K562 (cell line): ENCODE measurements at regions of chr2 and their contacts with region 1.

Region 1: DNA sequence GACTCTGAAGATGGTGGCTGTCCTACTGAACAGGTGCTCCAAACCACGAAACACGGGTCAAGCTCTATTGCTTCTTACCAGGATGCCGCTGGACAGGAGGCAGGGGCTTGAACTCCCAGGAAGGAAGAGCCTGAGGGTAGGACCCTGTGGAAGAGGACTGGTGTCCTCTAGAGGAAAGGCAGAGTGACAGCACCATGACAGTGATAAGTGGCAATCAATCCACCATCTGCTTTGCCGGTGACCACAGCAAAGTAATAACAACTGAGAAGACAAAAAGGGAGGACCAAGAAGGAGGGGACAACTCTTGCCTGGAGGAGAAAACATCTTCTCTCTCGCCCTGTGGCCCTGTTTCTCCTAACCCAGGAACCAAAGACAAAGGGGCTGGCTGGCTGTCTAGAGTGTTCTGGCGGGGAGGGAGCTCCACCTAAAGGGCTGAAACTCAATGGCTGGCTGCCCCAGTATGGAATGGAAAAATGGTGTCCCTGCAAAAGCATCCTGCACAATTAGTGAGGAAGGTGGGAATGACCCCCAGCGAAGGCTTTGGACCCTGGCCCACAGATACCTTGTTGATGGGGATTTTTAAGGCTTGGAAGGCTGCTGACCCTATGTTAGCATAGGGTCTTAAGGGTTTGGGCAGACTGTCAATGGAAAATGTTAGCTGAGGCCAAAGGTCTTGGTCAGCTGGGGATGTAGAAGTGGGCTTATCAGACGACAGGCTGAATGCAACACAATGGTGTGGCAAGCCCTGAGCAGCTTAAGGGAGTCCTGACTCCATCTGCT is 35.4 kb downstream of the PROC start:
- DNase-seq: peak; percentile 66 to 74 (median 70)
- ATAC-seq: peak; percentile 98
- H3K4me3 ChIP-seq: no peak overlapping the region
- H3K27ac ChIP-seq: no peak overlapping the region
- H3K4me1 ChIP-seq: no peaks in the 10 kb centered on the region; a peak in 1 of 5 replicates
- H3K27me3 ChIP-seq: peaks cover 0 to 14% of the 10 kb centered on the region in 2 experiments; a peak in 2 of 5 replicates
- CTCF ChIP-seq: peak; percentile 66 to 89 (median 77)
- EP300 ChIP-seq: no peak
- POLR2A ChIP-seq: no peak
- RAD21 ChIP-seq: peak; percentile 52 to 84

Region 2: GRCh38 chr2:127208313-127208712 is 245.3 kb before region 1 on chr2:
- CTCF ChIA-PET with region 1: no interaction called
- POLR2A ChIA-PET with region 1: no interaction called
- in situ Hi-C with region 1: loop called (anchors 10 kb)
- intact Hi-C with region 1: no loop called
- DNase-seq: no peak
- ATAC-seq: no peak
- H3K4me3 ChIP-seq: no peak overlapping the region
- H3K27ac ChIP-seq: no peak overlapping the region
- H3K4me1 ChIP-seq: peaks cover 0 to 5% of the 10 kb centered on the region in 2 experiments; a peak in 1 of 5 replicates
- H3K27me3 ChIP-seq: peaks cover 6 to 34% of the 10 kb centered on the region in 2 experiments; a peak in 4 of 5 replicates
- CTCF ChIP-seq: no peak
- EP300 ChIP-seq: no peak
- POLR2A ChIP-seq: no peak
- RAD21 ChIP-seq: no peak

Region 3: GRCh38 chr2:127277028-127277427 is 176.6 kb before region 1 on chr2:
- CTCF ChIA-PET with region 1: no interaction called
- POLR2A ChIA-PET with region 1: no interaction called
- in situ Hi-C with region 1: no loop called
- intact Hi-C with region 1: no loop called
- DNase-seq: no peak
- ATAC-seq: no peak
- H3K4me3 ChIP-seq: no peak overlapping the region
- H3K27ac ChIP-seq: no peak overlapping the region
- H3K4me1 ChIP-seq: no peaks in the 10 kb centered on the region
- H3K27me3 ChIP-seq: no peaks in the 10 kb centered on the region
- CTCF ChIP-seq: no peak
- EP300 ChIP-seq: no peak
- POLR2A ChIP-seq: no peak
- RAD21 ChIP-seq: no peak

Region 4: GRCh38 chr2:127324635-127325034 is 128.9 kb before region 1 on chr2:
- CTCF ChIA-PET with region 1: interaction called, 27 read pairs
- POLR2A ChIA-PET with region 1: no interaction called
- in situ Hi-C with region 1: no loop called
- intact Hi-C with region 1: loop called (anchors 1 kb)
- DNase-seq: peak; percentile 31 to 54 (median 38)
- ATAC-seq: peak; percentile 79
- H3K4me3 ChIP-seq: no peak overlapping the region
- H3K27ac ChIP-seq: no peak overlapping the region
- H3K4me1 ChIP-seq: no peaks in the 10 kb centered on the region
- H3K27me3 ChIP-seq: no peaks in the 10 kb centered on the region
- CTCF ChIP-seq: peak; percentile 50 to 76 (median 51); a peak in 4 of 6 replicates
- EP300 ChIP-seq: no peak
- POLR2A ChIP-seq: no peak
- RAD21 ChIP-seq: peak; percentile 72 to 78

Region 5: DNA sequence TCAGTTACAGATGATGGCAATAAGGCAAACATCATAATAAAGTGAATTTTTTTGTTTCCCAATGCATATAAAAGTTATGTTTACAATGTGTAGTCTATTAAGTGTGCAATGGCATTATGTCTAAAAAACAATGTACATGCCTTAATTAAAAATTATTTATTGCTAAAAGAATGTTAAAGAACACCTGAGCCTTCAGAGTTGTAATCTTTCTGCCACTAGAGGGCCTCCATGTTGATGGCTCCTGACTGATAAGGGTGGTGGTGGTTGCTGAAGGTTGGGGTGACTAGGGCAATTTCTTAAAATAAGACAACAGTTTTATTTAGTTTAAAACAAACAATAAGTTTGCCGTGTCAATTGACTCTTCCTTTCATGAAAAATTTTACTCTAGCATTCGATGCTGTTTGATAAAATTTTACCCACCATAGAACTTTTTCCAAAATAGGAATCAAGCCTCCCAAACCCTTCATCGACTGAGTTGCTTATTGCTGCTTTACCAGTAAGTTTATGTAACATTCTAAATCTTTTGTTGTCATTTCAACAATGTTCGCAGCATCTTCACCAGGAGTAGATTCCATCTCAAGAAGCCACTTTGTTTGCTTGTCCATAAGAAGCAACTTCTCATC is 98.1 kb before region 1 on chr2:
- CTCF ChIA-PET with region 1: interaction called, 3 read pairs
- POLR2A ChIA-PET with region 1: no interaction called
- in situ Hi-C with region 1: no loop called
- intact Hi-C with region 1: loop called (anchors 1 kb)
- DNase-seq: peak; percentile 44 to 66 (median 50)
- ATAC-seq: peak; percentile 90
- H3K4me3 ChIP-seq: no peak overlapping the region
- H3K27ac ChIP-seq: no peak overlapping the region
- H3K4me1 ChIP-seq: peaks cover 0 to 5% of the 10 kb centered on the region in 2 experiments; a peak in 2 of 5 replicates
- H3K27me3 ChIP-seq: no peaks in the 10 kb centered on the region
- CTCF ChIP-seq: peak; percentile 75 to 78 (median 77)
- EP300 ChIP-seq: no peak
- POLR2A ChIP-seq: no peak
- RAD21 ChIP-seq: peak; percentile 36 to 65; a peak in 3 of 4 replicates